Dorsolateral prefrontal cortex (tissue), 120 donors: ENCODE measurements at regions of chr13 and their contacts with region 1.

Region 1: GRCh38 chr13:27270594-27271520 is at the start of gene RASL11A:
- DNase-seq: peak; percentile 71 to 90 (median 83)
- H3K4me3 ChIP-seq: peak within 1 kb of the TSS; percentile 63 to 96 (median 89)
- H3K27ac ChIP-seq: peak within 1 kb of the TSS; percentile 32 to 97 (median 91)
- H3K27me3 ChIP-seq: no peaks in the 10 kb centered on the region
- CTCF ChIP-seq: peak in 55 of 56 donors; percentile 71 to 97 (median 89)
- total RNA-seq, gene RASL11A: 1.2 to 14.3 (median 5.2) TPM

Region 2: GRCh38 chr13:26668357-26669146 is 602.3 kb before region 1 on chr13:
- intact Hi-C with region 1: no loop called
- DNase-seq: no peak
- H3K4me3 ChIP-seq: no peak overlapping the region
- H3K27ac ChIP-seq: no peak overlapping the region
- H3K27me3 ChIP-seq: no peaks in the 10 kb centered on the region
- CTCF ChIP-seq: no peak

Region 3: DNA sequence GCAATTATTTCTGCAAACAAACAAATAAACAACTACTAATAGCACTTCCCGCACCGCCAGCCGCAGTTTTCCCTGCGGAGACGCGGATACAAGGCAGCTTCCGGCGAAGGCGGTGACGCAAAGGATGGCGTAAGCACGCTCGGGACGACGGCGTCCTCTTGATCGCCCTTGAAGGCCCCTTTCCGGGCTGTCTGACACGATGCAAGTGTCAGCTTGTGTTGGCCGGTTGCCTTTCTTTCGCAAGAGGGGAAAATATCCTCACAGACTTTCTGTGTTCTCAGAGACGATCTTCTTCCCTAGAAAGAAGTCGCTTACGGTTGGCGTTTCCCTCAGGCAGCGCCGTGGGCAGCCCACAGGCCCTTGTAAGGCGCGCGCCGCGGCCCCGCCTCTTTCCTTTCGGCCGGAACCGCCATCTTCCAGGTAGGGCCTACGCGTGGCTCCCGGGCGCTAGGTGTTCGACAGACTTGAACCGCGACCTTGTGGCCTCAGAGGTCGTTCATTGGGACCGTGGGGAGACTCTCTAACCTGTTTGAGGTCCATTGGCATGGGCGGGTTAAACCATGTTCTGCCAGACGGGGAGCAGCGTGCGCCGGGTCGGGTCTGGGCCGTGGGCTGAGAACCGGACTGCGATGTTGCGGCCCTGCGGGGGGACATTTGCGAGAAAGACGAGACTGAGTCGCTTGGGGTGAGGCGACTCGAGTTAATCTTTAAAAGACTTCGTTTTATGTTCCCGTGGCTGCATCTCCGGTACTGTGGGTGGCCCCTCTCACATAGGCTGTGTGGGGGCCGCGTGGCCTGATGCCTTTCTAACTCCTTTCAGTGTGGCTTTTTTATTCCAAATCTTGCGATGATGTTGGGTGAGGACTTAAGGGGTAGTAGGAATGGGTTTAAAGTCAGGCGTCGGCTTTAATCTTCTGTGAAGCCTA is 19.4 kb before region 1 on chr13 and contains the start of gene RPL21:
- intact Hi-C with region 1: loop called in 1 of 2 experiments (anchors 2 kb)
- DNase-seq: peak; percentile 89 to 97 (median 96)
- H3K4me3 ChIP-seq: peak within 1 kb of the TSS; percentile 69 to 100 (median 94)
- H3K27ac ChIP-seq: peak within 1 kb of the TSS; percentile 85 to 100 (median 98)
- H3K27me3 ChIP-seq: no peaks in the 10 kb centered on the region
- CTCF ChIP-seq: peak in 22 of 56 donors; percentile 5 to 47 (median 23)
- total RNA-seq, gene RPL21: 253 to 573 (median 415) TPM

Region 4: DNA sequence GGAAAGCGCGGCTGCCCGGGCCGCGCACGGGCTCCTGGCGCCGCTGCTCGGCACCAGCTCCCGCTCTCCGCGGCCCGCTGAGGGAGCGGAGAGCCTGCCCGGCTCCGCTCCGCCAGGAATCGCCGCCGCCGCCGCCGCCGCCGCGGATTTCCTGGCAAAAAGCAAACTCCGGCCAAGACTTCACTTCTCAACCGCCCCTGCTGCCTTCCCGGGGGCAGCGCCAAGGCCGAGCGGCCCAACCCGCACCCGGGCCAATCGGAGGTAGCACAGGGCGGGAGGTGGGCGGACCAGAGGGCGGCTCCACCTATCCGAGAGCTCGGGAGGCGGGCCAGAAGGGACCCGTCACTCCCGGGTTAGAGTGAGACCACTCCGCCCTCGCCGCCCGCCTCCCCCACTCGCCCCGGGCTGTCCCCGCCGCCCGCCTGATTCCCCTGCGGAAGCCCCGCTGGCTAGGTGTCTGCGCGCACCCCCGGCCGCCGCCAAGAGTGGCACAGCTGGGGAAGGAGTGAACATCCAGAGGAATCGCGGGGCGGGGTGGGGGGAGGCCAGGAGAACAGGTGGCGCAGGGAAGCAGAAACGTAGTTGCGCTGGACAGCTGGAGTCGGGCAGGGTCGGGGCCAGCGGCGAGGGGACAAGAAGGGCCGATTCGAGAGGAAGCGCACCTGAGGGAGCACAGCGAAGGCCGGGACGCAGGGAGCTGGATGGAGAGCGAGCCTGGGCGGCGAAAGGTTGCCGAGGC is 349.7 kb after region 1 on chr13 and contains the start of gene LNX2:
- intact Hi-C with region 1: loop called in 1 of 2 experiments (anchors 5 kb)
- DNase-seq: peak; percentile 95 to 100 (median 98)
- H3K4me3 ChIP-seq: peak within 1 kb of the TSS; percentile 74 to 99 (median 88)
- H3K27ac ChIP-seq: peak within 1 kb of the TSS; percentile 41 to 96 (median 89)
- H3K27me3 ChIP-seq: no peaks in the 10 kb centered on the region
- CTCF ChIP-seq: peak in 21 of 56 donors; percentile 0 to 53 (median 15)
- total RNA-seq, gene LNX2: 3.0 to 8.1 (median 5.5) TPM